ENCODE measurements at regions of chr17 and their contacts with region 1.

Region 1: GRCh38 chr17:1122533-1123392 is 57.0 kb downstream of the ABR start:
- DNase-seq: peak; percentile 42
- ATAC-seq: peak; percentile 98
- H3K4me3 ChIP-seq: no peak overlapping the region
- H3K27ac ChIP-seq: peak overlapping the region; percentile 15; the same call in 1 of the 2 replicates
- H3K4me1 ChIP-seq: peaks cover 7 to 13% of the 10 kb centered on the region in 2 experiments; a peak in 3 of 4 replicates
- H3K27me3 ChIP-seq: no peaks in the 10 kb centered on the region
- CTCF ChIP-seq: peak; percentile 84 to 88 (median 85); a peak in 5 of 6 replicates
- POLR2A ChIP-seq: no peak
- RAD21 ChIP-seq: peak; percentile 91

Region 2: DNA sequence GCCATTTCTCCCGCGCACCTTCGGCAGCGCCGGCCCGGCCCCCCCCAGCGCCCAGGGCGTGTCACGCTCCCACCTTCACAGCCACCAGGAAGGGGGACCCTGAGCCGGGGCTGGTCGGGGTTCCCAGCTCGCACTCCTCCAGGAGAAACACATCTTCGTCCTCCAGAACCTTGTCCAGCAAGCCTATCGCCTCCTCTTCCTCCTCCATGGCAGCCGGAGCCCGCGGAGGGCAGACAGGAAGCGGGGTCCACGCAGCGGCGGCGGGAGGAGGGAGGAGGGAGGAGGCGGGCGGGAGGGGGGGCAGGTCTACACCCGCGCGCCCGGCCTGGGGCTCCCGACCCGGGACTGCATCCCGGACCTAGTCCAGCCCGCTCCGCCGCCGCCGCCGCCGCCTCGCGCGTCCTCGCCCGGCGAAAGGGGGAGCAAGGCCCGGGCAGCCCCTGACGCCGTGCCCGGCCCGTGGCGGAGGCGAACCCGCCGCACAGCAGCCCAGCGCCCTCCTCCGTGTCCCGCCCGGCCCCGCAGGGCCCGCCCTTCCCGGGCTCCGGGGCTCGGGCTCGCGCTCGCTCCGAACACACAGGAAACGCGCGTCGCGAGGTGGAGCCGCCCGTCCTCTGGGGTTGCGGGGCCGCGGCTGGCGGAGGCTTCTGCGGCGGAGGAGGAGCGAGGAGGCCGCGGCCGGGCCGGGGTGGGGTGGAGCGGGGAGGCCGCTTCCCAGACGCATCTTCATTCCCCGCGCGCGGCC is 13.7 kb before region 1 on chr17:
- CTCF ChIA-PET with region 1: interaction called, 14 read pairs
- POLR2A ChIA-PET with region 1: interaction called, 3 read pairs
- RAD21 ChIA-PET with region 1: interaction called in 1 of 2 experiments, 3 read pairs
- intact Hi-C with region 1: no loop called
- DNase-seq: no peak
- ATAC-seq: peak; percentile 39
- H3K4me3 ChIP-seq: peak overlapping the region; percentile 67 to 79
- H3K27ac ChIP-seq: peak overlapping the region; percentile 96
- H3K4me1 ChIP-seq: peaks cover 50 to 59% of the 10 kb centered on the region in 2 experiments
- H3K27me3 ChIP-seq: no peaks in the 10 kb centered on the region
- CTCF ChIP-seq: no peak
- POLR2A ChIP-seq: no peak
- RAD21 ChIP-seq: no peak

Region 3: DNA sequence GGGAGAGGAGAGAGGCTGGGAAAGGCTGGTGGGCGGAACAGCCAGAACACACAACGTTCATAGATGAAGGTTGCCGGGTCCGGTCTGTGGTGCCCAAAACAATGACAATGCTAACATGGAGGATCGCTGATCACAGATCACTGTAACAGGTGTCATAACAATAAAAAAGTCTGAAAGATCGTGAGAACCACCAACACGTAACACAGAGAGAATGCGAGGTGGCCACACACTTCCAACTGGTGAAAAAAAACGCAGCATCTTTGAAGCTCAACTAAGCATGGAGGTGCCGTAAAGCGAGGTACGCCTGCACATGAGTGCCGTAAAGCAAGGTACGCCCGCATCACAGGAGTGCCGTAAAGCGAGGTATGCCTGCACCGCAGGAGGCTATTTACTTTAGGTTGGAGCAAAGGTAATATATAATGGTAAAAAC is 14.7 kb after region 1 on chr17:
- CTCF ChIA-PET with region 1: interaction called, 11 read pairs
- POLR2A ChIA-PET with region 1: interaction called, 4 read pairs
- RAD21 ChIA-PET with region 1: no interaction called
- intact Hi-C with region 1: no loop called
- DNase-seq: peak; percentile 92
- ATAC-seq: peak; percentile 80
- H3K4me3 ChIP-seq: peak overlapping the region; percentile 65 to 69
- H3K27ac ChIP-seq: peak overlapping the region; percentile 77
- H3K4me1 ChIP-seq: peaks cover 5 to 17% of the 10 kb centered on the region in 2 experiments; a peak in 3 of 4 replicates
- H3K27me3 ChIP-seq: no peaks in the 10 kb centered on the region
- CTCF ChIP-seq: no peak
- POLR2A ChIP-seq: peak; percentile 84
- RAD21 ChIP-seq: no peak

Region 4: DNA sequence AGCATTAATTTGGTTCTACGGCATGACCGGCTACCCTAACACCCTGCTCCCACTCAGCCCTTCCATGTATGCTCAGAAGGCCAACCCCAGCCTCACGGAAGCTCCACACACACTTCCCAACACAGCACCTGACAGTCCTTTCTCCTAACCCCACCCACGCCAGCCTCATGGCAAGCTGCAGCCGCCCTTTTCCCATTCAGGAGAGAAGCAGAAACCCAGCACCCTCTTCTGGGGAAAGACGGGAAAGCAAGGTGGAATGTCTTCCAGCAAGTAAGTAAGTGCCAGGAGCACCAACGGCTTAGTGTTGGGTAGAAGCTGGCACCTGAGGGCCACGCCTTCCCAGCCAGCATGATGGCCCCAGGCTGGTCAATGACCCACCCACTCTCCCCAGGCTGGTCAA is 24.9 kb after region 1 on chr17:
- CTCF ChIA-PET with region 1: interaction called, 29 read pairs
- POLR2A ChIA-PET with region 1: no interaction called
- RAD21 ChIA-PET with region 1: interaction called, 3 to 4 read pairs
- intact Hi-C with region 1: loop called (anchors 1 kb)
- DNase-seq: peak; percentile 71
- ATAC-seq: peak; percentile 96
- H3K4me3 ChIP-seq: no peak overlapping the region
- H3K27ac ChIP-seq: no peak overlapping the region
- H3K4me1 ChIP-seq: peaks cover 5 to 15% of the 10 kb centered on the region in 2 experiments
- H3K27me3 ChIP-seq: no peaks in the 10 kb centered on the region
- CTCF ChIP-seq: peak; percentile 68 to 90 (median 75)
- POLR2A ChIP-seq: no peak
- RAD21 ChIP-seq: peak; percentile 94

Region 5: GRCh38 chr17:1186923-1187771 is 64.4 kb after region 1 on chr17:
- CTCF ChIA-PET with region 1: interaction called, 19 read pairs
- POLR2A ChIA-PET with region 1: no interaction called
- RAD21 ChIA-PET with region 1: interaction called in 1 of 2 experiments, 3 read pairs
- intact Hi-C with region 1: loop called (anchors 2 kb)
- DNase-seq: peak; percentile 72
- ATAC-seq: peak; percentile 96
- H3K4me3 ChIP-seq: 0 out of 4 replicates have a peak overlapping the region, but pooled peaks of 1 of the 2 experiments have one; percentile 5
- H3K27ac ChIP-seq: no peak overlapping the region
- H3K4me1 ChIP-seq: peaks cover 7 to 36% of the 10 kb centered on the region in 2 experiments; a peak in 3 of 4 replicates
- H3K27me3 ChIP-seq: peaks cover 5% of the 10 kb centered on the region; the same call in 1 of the 2 replicates
- CTCF ChIP-seq: peak; percentile 90 to 99 (median 97)
- POLR2A ChIP-seq: no peak
- RAD21 ChIP-seq: peak; percentile 85

Region 6: GRCh38 chr17:1331708-1332107 is 208.9 kb after region 1 on chr17:
- CTCF ChIA-PET with region 1: interaction called, 5 read pairs
- POLR2A ChIA-PET with region 1: no interaction called
- RAD21 ChIA-PET with region 1: no interaction called
- intact Hi-C with region 1: loop called (anchors 5 kb)
- DNase-seq: no peak
- ATAC-seq: no peak
- H3K4me3 ChIP-seq: no peak overlapping the region
- H3K27ac ChIP-seq: no peak overlapping the region
- H3K4me1 ChIP-seq: no peaks in the 10 kb centered on the region
- H3K27me3 ChIP-seq: no peaks in the 10 kb centered on the region
- CTCF ChIP-seq: no peak
- POLR2A ChIP-seq: no peak
- RAD21 ChIP-seq: no peak